ENCODE measurements at regions of chr13 and their contacts with region 1.

Region 1: GRCh38 chr13:33349986-33350826 is 64.7 kb upstream of the STARD13 start:
- DNase-seq: peak in 1 of 2 donors; percentile 79
- H3K4me3 ChIP-seq: peak overlapping the region; percentile 64 to 96
- H3K27ac ChIP-seq: peak overlapping the region; percentile 90 to 94
- H3K4me1 ChIP-seq: peaks cover 5 to 12% of the 10 kb centered on the region in 2 donors
- H3K27me3 ChIP-seq: no peaks in the 10 kb centered on the region
- CTCF ChIP-seq: no peak

Region 2: DNA sequence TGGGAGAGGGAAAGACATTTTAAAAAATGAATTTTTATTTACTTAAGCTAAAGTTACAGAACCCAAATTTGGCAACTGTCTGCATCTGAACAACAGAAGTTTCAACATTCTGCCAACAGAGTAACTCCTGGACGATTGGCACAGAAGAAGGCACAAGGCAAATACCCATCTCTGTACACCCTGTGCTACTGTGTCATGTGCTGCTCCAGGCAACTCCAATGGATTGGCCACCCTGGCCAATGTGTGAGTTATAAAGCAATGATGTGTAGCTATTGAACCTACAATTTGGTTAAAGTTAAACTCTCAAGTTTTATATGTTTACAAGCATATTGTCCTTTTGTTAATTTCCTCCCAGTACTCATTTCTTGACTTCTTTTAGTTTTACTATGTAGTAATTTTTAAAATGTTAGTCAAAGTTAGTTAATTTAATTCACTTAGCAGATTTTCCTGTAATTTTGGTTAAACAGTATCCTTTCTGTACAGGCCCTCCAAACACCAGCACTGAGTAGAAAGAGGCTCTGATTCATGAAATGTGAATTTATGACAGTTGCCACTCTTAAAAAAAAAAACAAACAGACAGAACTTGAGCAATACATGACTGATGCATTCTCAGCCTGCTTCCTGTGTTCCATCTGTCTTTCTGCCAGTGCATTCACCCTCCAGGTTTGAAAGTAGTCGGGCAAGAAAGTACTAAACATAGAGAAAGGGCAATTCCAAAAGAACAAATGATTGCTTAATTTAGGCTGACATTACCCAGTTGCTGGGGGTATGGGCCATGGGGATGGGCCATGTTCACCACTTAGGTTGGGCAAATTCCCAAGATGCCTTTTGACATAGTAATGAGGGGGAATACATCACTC is 70.6 kb before region 1 on chr13:
- intact Hi-C with region 1: no loop called
- DNase-seq: peak in 1 of 2 donors; percentile 70
- H3K4me3 ChIP-seq: no peak overlapping the region
- H3K27ac ChIP-seq: peak overlapping the region; percentile 60 to 79
- H3K4me1 ChIP-seq: peaks cover 10 to 41% of the 10 kb centered on the region in 2 donors
- H3K27me3 ChIP-seq: no peaks in the 10 kb centered on the region
- CTCF ChIP-seq: no peak

Region 3: DNA sequence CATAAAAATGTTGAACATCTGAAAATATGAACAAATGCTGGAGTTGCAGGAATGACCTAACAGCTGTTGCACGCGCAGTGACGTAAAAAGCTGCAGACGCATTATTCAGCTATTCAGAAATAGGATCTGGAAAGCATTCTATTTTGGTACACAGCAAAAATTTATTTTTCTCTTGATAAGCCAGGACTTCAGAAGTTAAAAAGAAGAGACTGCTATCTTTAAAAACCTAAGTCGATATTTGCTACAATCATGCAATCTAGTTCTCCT is 27.7 kb before region 1 on chr13:
- intact Hi-C with region 1: loop called (anchors 1 kb)
- DNase-seq: peak in 1 of 2 donors; percentile 79
- H3K4me3 ChIP-seq: peak overlapping the region; percentile 16 to 56
- H3K27ac ChIP-seq: peak overlapping the region; percentile 62 to 63
- H3K4me1 ChIP-seq: peaks cover 4 to 26% of the 10 kb centered on the region in 2 donors
- H3K27me3 ChIP-seq: no peaks in the 10 kb centered on the region
- CTCF ChIP-seq: no peak

Region 4: DNA sequence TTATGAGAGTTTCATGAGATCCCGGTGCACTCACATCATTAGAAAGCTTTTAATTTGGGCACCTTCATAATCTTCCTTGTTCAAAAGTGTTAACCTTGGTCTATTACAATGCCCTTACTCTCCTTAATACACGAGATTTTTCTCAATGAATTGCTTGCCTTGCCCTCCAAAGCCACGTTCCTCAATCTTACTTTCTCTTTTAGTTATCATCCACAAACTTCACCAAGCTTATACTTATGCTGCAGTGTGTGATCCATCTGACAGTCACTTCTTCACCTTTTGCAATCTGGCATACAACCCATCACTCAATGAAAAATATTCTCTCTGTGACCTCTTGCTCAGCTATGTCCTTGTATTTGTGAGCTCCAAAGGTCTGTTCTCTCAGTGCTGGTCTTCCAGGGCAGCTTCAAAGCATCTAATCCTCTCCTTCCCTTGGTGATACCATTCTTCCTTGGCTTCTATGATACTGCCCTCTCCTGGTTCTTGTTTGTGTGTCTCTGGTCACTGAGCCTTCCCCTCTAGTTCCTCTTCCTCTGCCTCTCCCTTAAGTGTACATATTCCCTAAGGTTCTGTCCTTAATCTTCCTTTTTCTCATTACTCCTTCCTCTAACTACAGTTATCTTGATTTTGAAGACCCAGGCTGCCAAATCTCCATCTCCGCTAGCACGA is 137.5 kb after region 1 on chr13:
- intact Hi-C with region 1: loop called (anchors 2 kb)
- DNase-seq: peak in 1 of 2 donors; percentile 65
- H3K4me3 ChIP-seq: peak overlapping the region; percentile 29 to 56
- H3K27ac ChIP-seq: peak overlapping the region; percentile 35 to 60
- H3K4me1 ChIP-seq: peaks cover 0 to 13% of the 10 kb centered on the region in 2 donors
- H3K27me3 ChIP-seq: no peaks in the 10 kb centered on the region
- CTCF ChIP-seq: peak in 2 of 3 experiments; percentile 25 to 43